Panc1 (cell line): ENCODE measurements at regions of chr15 and their contacts with region 1.

Region 1: GRCh38 chr15:40838776-40839175 is 5.1 kb upstream of the SPINT1 start:
- DNase-seq: no peak
- ATAC-seq: no peak
- H3K4me3 ChIP-seq: no peak overlapping the region
- H3K27ac ChIP-seq: no peak overlapping the region
- H3K4me1 ChIP-seq: peaks cover 4% of the 10 kb centered on the region; the same call in 1 of the 2 replicates
- H3K27me3 ChIP-seq: peaks cover 5% of the 10 kb centered on the region; the same call in 1 of the 2 replicates
- CTCF ChIP-seq: no peak

Region 2: GRCh38 chr15:40782580-40783227 is 56.1 kb before region 1 on chr15:
- CTCF ChIA-PET with region 1: no interaction called
- POLR2A ChIA-PET with region 1: no interaction called
- in situ Hi-C with region 1: no loop called
- intact Hi-C with region 1: no loop called
- DNase-seq: peak; percentile 35
- ATAC-seq: peak; percentile 99
- H3K4me3 ChIP-seq: no peak overlapping the region
- H3K27ac ChIP-seq: no peak overlapping the region
- H3K4me1 ChIP-seq: peaks cover 5% of the 10 kb centered on the region; the same call in 1 of the 2 replicates
- H3K27me3 ChIP-seq: no peaks in the 10 kb centered on the region
- CTCF ChIP-seq: peak; percentile 87; the same call in 1 of the 2 replicates

Region 3: DNA sequence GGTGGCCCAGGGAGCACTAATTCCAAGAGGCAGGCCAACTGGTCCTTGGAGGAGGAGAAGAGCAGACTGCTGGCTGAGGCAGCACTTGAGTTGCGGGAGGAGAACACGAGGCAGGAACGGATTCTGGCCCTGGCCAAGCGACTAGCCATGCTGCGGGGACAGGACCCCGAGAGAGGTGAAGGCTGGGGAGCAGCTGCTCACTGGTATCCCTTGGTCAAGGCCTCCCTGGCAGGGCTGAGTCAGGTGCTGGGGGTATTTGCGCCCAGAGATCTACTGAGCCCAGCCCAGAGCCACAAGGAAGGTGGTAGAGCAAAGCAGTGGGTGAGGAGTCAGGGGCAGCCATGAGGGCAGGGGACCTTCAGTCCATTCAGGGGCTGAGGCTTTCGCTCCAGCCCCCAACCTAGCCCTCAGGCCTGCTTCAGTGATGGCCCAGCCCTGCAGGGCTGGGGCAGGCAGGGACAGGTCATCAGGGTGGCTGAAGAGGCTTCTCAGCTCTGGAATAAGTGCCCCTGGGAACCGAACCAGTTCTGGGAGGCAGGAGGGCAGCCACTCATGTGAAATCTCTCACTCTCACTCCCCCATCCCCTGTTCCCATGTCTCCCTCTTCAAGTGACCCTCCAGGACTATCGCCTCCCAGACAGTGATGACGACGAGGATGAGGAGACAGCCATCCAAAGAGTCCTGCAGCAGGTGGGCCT is 25.9 kb before region 1 on chr15:
- CTCF ChIA-PET with region 1: no interaction called
- POLR2A ChIA-PET with region 1: no interaction called
- in situ Hi-C with region 1: no loop called
- intact Hi-C with region 1: no loop called
- DNase-seq: no peak
- ATAC-seq: no peak
- H3K4me3 ChIP-seq: no peak overlapping the region
- H3K27ac ChIP-seq: no peak overlapping the region
- H3K4me1 ChIP-seq: peaks cover 13% of the 10 kb centered on the region
- H3K27me3 ChIP-seq: no peaks in the 10 kb centered on the region
- CTCF ChIP-seq: no peak

Region 4: GRCh38 chr15:41546846-41547786 is 708.3 kb after region 1 on chr15:
- CTCF ChIA-PET with region 1: no interaction called
- POLR2A ChIA-PET with region 1: interaction called, 11 read pairs
- in situ Hi-C with region 1: no loop called
- intact Hi-C with region 1: no loop called
- DNase-seq: no peak
- ATAC-seq: peak; percentile 62
- H3K4me3 ChIP-seq: no peak overlapping the region
- H3K27ac ChIP-seq: peak overlapping the region; percentile 29; the same call in 1 of the 2 replicates
- H3K4me1 ChIP-seq: peaks cover 12% of the 10 kb centered on the region
- H3K27me3 ChIP-seq: no peaks in the 10 kb centered on the region
- CTCF ChIP-seq: no peak